ENCODE measurements at regions of chr2 and their contacts with region 1.

Region 1: GRCh38 chr2:151238527-151239487 is 22.9 kb downstream of the RBM43 start:
- DNase-seq: peak; percentile 34 to 48 (median 46)
- H3K4me3 ChIP-seq: no peak overlapping the region
- H3K4me3 Mint-ChIP-seq: no peak overlapping the region
- H3K27ac ChIP-seq: no peak overlapping the region
- H3K27ac Mint-ChIP-seq: no peak overlapping the region
- H3K4me1 ChIP-seq: no peaks in the 10 kb centered on the region
- H3K4me1 Mint-ChIP-seq: peaks cover 0 to 5% (median 0%) of the 10 kb centered on the region in 4 donors
- H3K27me3 ChIP-seq: no peaks in the 10 kb centered on the region
- H3K27me3 Mint-ChIP-seq: peaks cover 0 to 6% of the 10 kb centered on the region in 2 donors

Region 2: GRCh38 chr2:151251012-151251411 is 12.2 kb after region 1 on chr2:
- CTCF ChIA-PET with region 1: interaction called, 36 read pairs
- POLR2A ChIA-PET with region 1: no interaction called
- intact Hi-C with region 1: no loop called
- DNase-seq: no peak
- H3K4me3 ChIP-seq: no peak overlapping the region
- H3K4me3 Mint-ChIP-seq: no peak overlapping the region
- H3K27ac ChIP-seq: no peak overlapping the region
- H3K27ac Mint-ChIP-seq: no peak overlapping the region
- H3K4me1 ChIP-seq: no peaks in the 10 kb centered on the region
- H3K4me1 Mint-ChIP-seq: peaks cover 0 to 8% (median 7%) of the 10 kb centered on the region in 4 donors
- H3K27me3 ChIP-seq: no peaks in the 10 kb centered on the region
- H3K27me3 Mint-ChIP-seq: no peaks in the 10 kb centered on the region

Region 3: DNA sequence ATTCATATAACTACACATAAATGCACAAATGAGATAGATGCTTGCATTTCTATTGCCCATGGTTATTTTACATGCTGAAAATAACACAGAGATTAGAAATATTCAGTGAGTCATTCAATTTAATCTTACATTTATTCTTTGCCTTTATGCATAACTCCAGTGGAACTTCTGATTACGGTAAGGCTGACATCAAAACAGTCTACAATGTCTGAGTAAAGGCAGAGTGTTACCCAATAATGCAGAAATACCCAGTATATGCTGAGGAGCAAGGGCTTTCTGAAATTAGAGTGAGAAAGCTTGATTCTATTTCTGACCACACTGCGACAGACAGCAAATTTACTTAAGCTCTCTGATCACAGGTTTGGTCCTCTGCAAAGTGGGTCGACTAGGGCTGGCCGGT is 41.5 kb after region 1 on chr2:
- CTCF ChIA-PET with region 1: interaction called, 10 read pairs
- POLR2A ChIA-PET with region 1: no interaction called
- intact Hi-C with region 1: no loop called
- DNase-seq: no peak
- H3K4me3 ChIP-seq: no peak overlapping the region
- H3K4me3 Mint-ChIP-seq: no peak overlapping the region
- H3K27ac ChIP-seq: no peak overlapping the region
- H3K27ac Mint-ChIP-seq: no peak overlapping the region
- H3K4me1 ChIP-seq: peaks cover under 1% of the 10 kb centered on the region
- H3K4me1 Mint-ChIP-seq: peaks cover 13 to 15% (median 15%) of the 10 kb centered on the region in 4 donors
- H3K27me3 ChIP-seq: no peaks in the 10 kb centered on the region
- H3K27me3 Mint-ChIP-seq: no peaks in the 10 kb centered on the region

Region 4: GRCh38 chr2:151302879-151303278 is 64.1 kb after region 1 on chr2:
- CTCF ChIA-PET with region 1: no interaction called
- POLR2A ChIA-PET with region 1: no interaction called
- intact Hi-C with region 1: no loop called
- DNase-seq: no peak
- H3K4me3 ChIP-seq: no peak overlapping the region
- H3K4me3 Mint-ChIP-seq: no peak overlapping the region
- H3K27ac ChIP-seq: no peak overlapping the region
- H3K27ac Mint-ChIP-seq: no peak overlapping the region
- H3K4me1 ChIP-seq: no peaks in the 10 kb centered on the region
- H3K4me1 Mint-ChIP-seq: no peaks in the 10 kb centered on the region
- H3K27me3 ChIP-seq: no peaks in the 10 kb centered on the region
- H3K27me3 Mint-ChIP-seq: peaks cover 18 to 19% of the 10 kb centered on the region in 2 donors

Measured in CD4-positive, alpha-beta memory T cell (primary cell).